ENCODE measurements at regions of chr4 and their contacts with region 1.

Region 1: GRCh38 chr4:170051402-170051801 is 25.2 kb upstream of the MFAP3L start:
- DNase-seq: no peak
- ATAC-seq: no peak
- H3K4me3 ChIP-seq: no peak overlapping the region
- H3K27ac ChIP-seq: no peak overlapping the region
- H3K4me1 ChIP-seq: no peaks in the 10 kb centered on the region
- H3K27me3 ChIP-seq: no peaks in the 10 kb centered on the region
- CTCF ChIP-seq: no peak

Region 2: GRCh38 chr4:169201222-169202144 is 849.9 kb before region 1 on chr4:
- intact Hi-C with region 1: no loop called
- DNase-seq: no peak
- ATAC-seq: no peak
- H3K4me3 ChIP-seq: no peak overlapping the region
- H3K27ac ChIP-seq: peak overlapping the region; percentile 32
- H3K4me1 ChIP-seq: peaks cover 29% of the 10 kb centered on the region
- H3K27me3 ChIP-seq: no peaks in the 10 kb centered on the region
- CTCF ChIP-seq: no peak

Region 3: DNA sequence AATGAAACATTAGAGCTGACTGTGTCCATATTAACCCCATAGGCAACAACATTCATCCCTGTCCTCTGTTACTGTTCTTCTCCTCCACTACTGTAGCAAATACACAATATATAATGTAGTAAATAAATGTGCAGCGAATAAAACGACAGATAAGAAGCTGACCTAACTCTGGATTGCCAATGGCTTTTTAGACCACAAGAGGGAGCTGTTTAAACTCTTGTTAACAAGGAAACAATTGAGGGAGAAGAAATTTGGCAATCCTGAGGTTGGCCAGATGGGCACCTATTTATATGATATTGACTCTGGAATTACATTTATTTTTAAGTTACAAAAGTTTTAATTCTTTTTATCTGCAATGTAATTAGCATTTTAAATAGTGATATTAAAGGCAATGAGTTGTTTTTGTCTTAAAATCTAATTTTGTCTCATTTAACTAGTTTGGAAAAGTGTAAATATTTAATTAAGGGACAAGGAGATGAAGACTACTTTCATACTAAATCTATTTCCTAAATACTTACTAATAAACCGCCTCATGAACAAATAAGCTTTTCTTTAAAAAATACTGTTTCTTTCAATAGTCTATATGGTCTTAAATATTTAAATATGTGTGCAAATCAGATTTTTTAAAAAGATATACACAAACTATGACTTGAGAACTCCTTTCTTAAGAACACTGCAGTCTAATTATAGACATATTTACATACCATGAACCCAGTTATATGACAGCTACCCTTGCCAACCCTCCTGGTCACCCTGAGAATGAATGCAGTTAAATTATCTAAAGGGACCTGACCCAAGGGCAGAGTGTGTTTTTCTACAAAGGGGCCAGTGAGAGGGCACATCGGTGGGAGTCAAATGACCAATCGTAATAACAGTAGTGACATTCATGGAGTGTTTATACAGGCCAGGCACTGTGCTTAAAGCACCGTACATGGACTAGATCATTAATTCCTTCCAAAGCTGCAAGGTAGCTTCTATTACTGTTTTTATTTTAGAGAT is 240.8 kb before region 1 on chr4:
- intact Hi-C with region 1: loop called (anchors 10 kb)
- DNase-seq: no peak
- ATAC-seq: peak; percentile 84
- H3K4me3 ChIP-seq: no peak overlapping the region
- H3K27ac ChIP-seq: no peak overlapping the region
- H3K4me1 ChIP-seq: no peaks in the 10 kb centered on the region
- H3K27me3 ChIP-seq: no peaks in the 10 kb centered on the region
- CTCF ChIP-seq: peak; percentile 90

Measured in upper lobe of right lung (tissue), 1 donor.